ENCODE measurements at regions of chr20 and their contacts with region 1.

Region 1: GRCh38 chr20:31661625-31662371 is 24.1 kb downstream of the COX4I2 start:
- DNase-seq: peak; percentile 81
- H3K4me3 Mint-ChIP-seq: peak overlapping the region; percentile 69
- H3K27ac Mint-ChIP-seq: peak overlapping the region; percentile 80
- H3K4me1 Mint-ChIP-seq: peaks cover 55% of the 10 kb centered on the region
- H3K27me3 Mint-ChIP-seq: no peaks in the 10 kb centered on the region

Region 2: DNA sequence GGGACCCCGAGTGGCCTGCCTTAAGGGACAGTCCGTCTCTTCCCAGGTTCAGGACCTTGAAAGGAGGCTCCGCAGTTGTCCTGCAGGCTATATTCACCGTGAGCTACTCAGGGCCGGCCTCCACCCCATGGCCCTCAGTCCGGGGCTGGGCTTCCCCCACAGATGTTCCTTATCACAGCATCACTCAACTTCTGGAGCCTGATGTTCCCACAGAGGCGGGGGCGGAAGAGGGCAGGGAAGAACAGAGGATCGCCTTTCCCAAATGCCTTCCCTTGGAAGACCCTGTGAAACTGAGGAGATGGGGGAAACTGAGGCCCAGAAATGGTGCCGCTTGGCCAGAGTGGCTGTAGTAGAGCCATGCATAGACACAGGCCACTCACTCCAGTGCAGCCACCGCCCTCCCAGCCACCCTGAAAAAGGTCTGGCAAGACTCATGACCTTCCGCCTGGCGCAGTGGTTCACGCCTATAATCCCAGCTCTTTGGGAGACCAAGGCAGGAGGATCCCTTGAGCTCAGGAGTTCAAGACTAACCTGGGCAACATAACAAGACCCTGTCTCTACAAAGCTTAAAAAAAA is 28.4 kb before region 1 on chr20:
- CTCF ChIA-PET with region 1: interaction called, 53 read pairs
- POLR2A ChIA-PET with region 1: interaction called, 7 read pairs
- DNase-seq: no peak
- H3K4me3 Mint-ChIP-seq: no peak overlapping the region
- H3K27ac Mint-ChIP-seq: no peak overlapping the region
- H3K4me1 Mint-ChIP-seq: peaks cover 3% of the 10 kb centered on the region
- H3K27me3 Mint-ChIP-seq: no peaks in the 10 kb centered on the region

Region 3: DNA sequence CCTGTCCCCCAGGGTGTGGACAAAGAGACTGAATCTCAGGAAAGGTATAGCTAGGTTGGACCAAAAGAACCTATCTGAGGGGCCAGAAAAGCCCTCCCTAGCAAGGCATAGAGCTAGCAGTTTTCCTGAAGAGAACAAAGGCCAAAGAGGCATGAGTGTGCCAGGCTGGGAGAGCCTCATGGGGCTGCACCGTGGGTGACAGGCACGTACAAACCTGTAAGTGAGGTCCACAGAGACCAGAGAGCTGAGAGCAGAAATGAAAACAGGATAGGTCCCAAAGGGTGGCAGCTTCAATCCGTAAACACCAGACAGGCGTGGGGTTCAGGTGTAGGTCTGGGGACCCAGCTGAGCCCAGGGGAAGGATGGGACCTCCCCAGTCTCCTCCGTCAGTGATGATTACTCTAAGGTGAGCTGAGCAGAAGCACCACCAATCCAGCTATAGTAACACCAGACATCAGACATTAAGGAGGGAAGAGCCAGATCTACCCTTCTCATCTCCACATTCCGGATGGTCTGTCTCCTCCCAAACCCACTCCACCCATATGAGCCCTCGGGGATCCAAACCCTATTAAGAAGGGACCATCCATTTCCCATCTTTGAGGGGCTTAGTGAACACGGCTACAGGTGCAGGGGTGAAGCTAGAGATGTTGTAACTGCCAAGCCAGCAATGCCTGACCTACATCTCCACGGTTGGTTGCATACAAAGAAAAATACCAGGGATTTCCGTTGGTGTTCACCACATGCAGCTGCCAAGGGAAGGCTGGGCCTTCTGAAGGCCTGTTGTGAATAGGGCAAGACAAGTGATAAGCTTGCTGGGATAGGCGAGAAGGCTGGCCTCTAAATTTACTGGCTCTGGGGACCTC is 22.6 kb after region 1 on chr20:
- CTCF ChIA-PET with region 1: interaction called, 19 read pairs
- POLR2A ChIA-PET with region 1: interaction called, 15 read pairs
- DNase-seq: peak; percentile 45
- H3K4me3 Mint-ChIP-seq: no peak overlapping the region
- H3K27ac Mint-ChIP-seq: peak overlapping the region; percentile 69
- H3K4me1 Mint-ChIP-seq: peaks cover 85% of the 10 kb centered on the region
- H3K27me3 Mint-ChIP-seq: no peaks in the 10 kb centered on the region

Region 4: DNA sequence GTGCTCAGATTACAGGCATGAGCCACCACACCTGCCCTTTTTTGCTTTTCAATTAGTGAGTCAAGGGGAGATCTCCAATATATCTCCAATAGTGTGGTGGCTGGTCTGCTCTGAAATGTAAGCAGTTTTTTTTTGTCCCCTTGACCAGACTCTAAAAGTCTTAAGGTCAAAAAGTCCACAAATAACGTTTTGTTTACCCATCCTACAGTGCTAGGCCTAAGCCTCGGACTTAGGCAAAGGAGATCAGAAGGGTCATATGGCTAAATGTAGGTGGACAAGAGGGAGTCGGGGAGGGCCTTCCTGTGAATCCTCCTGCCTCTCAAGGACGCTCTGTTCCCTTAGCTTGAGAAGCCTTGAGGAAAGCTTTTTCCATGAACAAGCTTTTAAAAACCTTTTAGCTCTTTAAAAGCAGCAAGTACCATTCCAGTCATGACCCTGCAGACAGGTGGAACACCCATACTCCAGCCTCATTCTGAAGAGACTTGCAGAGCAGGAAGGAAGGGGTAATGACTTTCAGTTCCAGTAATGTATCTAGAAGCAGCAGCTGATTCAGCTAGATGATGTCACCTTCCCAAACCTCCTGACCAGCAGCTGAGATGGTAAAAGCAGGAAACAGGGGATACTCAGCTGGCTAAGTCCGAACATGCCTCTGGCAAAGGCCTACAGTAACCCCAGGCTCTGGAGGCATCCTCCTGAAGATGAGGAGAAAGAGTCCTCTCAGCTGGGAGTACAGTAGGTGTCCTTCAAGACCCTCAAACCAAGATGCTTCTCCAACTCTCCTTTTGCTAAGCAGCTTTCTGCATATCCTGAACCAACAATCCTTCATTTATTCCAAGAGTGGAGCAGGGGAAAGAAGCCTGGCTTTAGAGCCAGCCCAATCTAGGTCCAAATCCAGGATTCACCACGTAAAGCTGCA is 37.3 kb after region 1 on chr20:
- CTCF ChIA-PET with region 1: interaction called, 39 read pairs
- POLR2A ChIA-PET with region 1: interaction called, 8 read pairs
- DNase-seq: peak; percentile 49
- H3K4me3 Mint-ChIP-seq: peak overlapping the region; percentile 33
- H3K27ac Mint-ChIP-seq: peak overlapping the region; percentile 83
- H3K4me1 Mint-ChIP-seq: peaks cover 68% of the 10 kb centered on the region
- H3K27me3 Mint-ChIP-seq: no peaks in the 10 kb centered on the region

Region 5: GRCh38 chr20:31738729-31739561 is 77.1 kb after region 1 on chr20 and contains the start of gene TPX2:
- CTCF ChIA-PET with region 1: interaction called, 22 read pairs
- POLR2A ChIA-PET with region 1: interaction called, 9 read pairs
- DNase-seq: peak; percentile 86
- H3K4me3 Mint-ChIP-seq: no peak within 1 kb of the TSS
- H3K27ac Mint-ChIP-seq: no peak within 1 kb of the TSS
- H3K4me1 Mint-ChIP-seq: peaks cover 9% of the 10 kb centered on the region
- H3K27me3 Mint-ChIP-seq: no peaks in the 10 kb centered on the region
- total RNA-seq, gene TPX2: 137 to 138 TPM